Left cardiac atrium (tissue), 4 donors: ENCODE measurements at regions of chr12 and their contacts with region 1.

Region 1: DNA sequence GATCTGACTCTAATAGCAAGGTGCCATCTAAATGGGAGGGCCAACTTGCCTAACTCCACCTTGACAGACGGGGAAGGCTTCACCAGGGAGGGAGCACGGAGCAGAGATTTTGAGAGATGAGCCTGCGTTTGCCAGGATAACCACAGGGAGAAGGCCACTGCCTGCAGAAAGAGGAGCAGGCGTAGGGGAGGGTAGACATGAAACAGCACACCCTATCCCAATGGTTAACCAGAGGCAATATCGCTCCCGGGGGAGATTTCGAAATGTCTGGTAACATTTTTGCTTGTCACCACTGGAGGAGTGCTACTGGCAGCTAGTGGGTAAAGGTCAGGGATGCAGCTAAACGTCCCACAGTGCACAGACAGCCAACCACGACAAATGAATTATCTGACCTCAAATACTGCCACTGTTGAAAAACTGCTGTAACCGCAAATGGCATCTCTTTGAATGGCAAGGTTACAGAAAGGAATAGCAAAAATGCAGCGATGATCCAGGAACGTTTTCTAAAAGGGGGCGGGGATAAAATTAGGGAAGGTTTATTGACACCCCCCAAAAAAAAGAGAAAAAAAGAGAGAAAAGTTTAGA is 126.0 kb upstream of the ATF7IP start:
- DNase-seq: peak; percentile 36
- ATAC-seq: peak; percentile 87 to 93

Region 2: GRCh38 chr12:13816394-13816793 is 423.0 kb before region 1 on chr12:
- intact Hi-C with region 1: no loop called
- DNase-seq: no peak
- ATAC-seq: no peak

Region 3: DNA sequence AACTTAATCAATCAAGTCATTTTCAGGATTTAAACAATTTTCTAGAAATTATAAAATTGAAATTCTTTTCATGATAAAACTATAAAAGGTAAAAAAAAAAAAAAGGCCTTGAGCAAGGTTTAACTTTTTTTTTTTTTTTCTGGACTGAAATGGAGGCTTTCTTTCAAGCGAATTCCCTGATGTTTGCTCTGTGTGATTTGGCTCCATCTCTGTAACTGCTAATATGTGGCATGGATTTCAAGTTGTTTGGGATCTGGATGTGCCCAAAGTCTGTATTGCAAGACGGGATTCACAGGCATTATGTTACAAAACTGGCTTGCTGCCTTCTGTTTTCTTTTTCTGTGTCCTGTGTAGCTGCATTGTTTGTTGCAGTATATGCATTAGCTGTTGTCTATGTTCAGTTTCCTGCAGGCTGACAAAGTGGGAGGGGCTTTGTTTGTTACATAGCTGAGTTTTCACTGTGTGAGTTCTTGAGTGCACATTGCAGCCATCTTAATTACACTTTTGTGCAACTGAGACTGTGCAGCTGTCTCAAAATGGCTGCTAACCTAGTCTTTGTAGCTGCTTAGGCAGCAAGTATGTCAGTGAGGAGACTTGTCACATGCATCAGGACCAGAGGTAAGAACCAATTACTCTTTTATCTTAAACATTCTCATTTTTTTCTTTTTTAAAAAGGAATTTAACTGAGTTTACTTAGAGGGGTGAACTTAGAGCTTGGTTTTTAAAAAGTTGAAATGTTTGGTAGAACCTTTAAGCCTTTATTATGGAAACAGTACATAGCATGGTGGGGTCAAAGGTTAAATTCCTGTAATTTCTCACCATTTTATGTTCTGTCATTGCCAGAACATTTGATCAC is 145.6 kb after region 1 on chr12:
- intact Hi-C with region 1: no loop called
- DNase-seq: peak; percentile 29
- ATAC-seq: peak; percentile 96 to 97

Region 4: GRCh38 chr12:14417715-14418114 is 178.3 kb after region 1 on chr12:
- intact Hi-C with region 1: loop called in 1 of 2 experiments (anchors 2 kb)
- DNase-seq: peak; percentile 63
- ATAC-seq: peak; percentile 85

Region 5: DNA sequence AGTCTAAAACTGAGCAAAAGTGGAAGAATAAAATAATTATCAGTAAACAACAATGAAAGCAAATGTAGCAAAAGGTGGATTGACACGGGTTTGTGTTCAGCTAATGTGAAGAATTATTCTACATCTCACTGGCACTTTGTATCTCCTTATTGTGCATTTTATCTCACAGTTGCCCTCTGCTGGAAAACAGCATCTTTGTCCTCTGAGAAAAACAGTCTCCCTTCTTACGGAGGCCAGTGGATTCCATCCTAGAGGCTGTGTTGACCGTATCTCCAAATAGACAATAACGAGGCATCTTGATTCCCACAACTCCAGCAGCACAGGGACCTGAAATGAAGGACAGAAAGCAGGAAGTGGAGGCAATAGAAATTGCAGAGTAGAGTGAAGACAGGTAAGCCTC is 379.5 kb after region 1 on chr12:
- intact Hi-C with region 1: loop called in 1 of 2 experiments (anchors 2 kb)
- DNase-seq: no peak
- ATAC-seq: peak; percentile 24 to 59

Region 6: GRCh38 chr12:14664510-14664909 is 425.1 kb after region 1 on chr12:
- intact Hi-C with region 1: loop called in 1 of 2 experiments (anchors 2 kb)
- DNase-seq: no peak
- ATAC-seq: peak in 1 of 2 donors; percentile 66